ENCODE measurements at regions of chr10 and their contacts with region 1.

Region 1: DNA sequence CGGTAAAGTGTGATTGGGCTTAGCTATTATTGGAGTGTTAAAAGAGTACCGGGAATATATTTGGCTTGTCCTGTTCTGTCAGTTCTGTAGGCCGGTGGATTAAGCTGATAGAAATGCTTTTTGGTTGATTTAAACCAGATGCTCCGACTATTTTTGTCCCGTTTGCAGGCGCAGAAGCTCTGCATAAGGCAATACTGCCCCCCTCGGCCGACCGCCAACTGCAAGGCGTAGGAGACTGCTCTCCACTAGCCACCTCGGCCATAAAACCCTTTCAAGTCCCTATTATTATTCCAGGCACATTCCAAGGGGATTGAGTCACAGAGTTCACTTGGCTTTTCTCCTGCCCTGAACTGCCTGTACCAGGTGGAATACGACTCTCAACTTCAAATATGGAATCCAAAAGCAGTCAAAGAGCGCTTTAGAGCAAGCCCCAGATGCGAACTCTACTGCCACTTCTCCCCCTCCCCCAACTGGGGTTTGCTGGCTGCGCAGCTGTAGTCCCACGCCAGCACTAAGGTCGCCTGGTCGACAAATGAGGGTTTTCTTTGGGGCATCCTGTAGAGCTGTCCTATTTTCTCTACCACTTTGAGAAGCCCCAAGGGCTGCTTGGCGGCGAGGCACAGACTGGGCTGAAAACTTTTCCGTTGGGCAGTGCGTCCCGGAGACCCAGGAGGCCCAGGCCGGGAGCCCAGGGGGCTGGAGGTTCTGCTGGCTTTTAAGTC is 108.3 kb downstream of the REEP3 start:
- DNase-seq: peak; percentile 98

Region 2: GRCh38 chr10:62804356-62805230 is 824.9 kb before region 1 on chr10 and contains the start of gene ADO:
- intact Hi-C with region 1: loop called in 1 of 2 experiments (anchors 10 kb)
- DNase-seq: peak; percentile 96
- total RNA-seq, gene ADO: 16.4 to 20.7 TPM

Region 3: GRCh38 chr10:63666836-63667383 is 37.4 kb after region 1 on chr10:
- intact Hi-C with region 1: loop called in 1 of 2 experiments (anchors 5 kb)
- DNase-seq: no peak

Measured in posterior vena cava (tissue), 2 donors.